CD8-positive, alpha-beta T cell (primary cell): ENCODE measurements at regions of chr3 and their contacts with region 1.

Region 1: GRCh38 chr3:98540346-98540745 is 8.6 kb downstream of the GPR15 start:
- DNase-seq: peak in 1 of 9 experiments; percentile 56
- ATAC-seq: peak; percentile 21
- H3K4me3 ChIP-seq: no peak overlapping the region
- H3K4me3 Mint-ChIP-seq: peak overlapping the region; percentile 22
- H3K27ac ChIP-seq: no peak overlapping the region
- H3K27ac Mint-ChIP-seq: peak overlapping the region; percentile 2
- H3K4me1 ChIP-seq: no peaks in the 10 kb centered on the region
- H3K4me1 Mint-ChIP-seq: peaks cover 11% of the 10 kb centered on the region
- H3K27me3 ChIP-seq: no peaks in the 10 kb centered on the region
- H3K27me3 Mint-ChIP-seq: no peaks in the 10 kb centered on the region
- CTCF ChIP-seq: no peak

Region 2: DNA sequence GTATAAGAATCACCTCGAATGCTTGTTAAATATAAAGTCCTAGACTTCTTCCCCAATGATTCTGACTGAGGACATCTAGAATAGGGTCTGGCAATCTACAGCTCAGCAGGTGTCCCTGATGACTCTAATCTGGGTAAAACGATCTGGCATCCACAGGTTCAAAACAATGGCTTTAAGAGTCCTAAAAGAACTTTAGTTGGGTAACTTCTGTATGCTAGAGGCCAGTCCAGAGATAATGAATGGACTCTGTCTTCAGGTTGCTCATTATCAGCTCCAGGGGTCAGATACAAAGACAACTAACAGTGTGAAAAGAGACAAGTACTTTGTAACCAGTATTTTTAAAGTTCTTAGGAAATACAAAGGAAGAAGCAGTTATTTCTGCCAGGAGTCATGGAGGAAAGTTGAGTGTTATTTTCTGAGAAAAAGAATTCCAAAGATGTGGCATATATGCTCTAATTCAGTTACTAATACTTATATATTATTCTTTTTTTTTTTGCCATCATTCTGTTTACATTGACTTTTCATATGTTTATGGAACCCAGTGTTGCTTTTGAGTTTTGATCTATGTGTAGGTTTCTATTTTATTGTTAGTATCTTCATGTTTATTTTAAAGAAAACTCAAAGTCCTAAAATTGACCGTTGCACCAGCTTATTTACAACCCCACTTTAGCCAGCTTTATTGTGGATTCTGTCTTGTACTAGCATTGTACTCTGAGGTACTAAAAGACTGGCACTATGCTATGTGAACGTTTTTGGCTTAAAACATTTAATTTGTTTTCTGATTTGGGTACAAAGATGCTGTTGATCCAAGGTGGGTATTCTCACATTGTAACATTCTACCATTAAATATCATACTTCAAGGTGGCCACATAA is 11.6 kb before region 1 on chr3:
- CTCF ChIA-PET with region 1: interaction called, 3 read pairs
- POLR2A ChIA-PET with region 1: interaction called, 3 read pairs
- intact Hi-C with region 1: loop called in 1 of 2 experiments (anchors 2 kb)
- DNase-seq: no peak
- ATAC-seq: no peak
- H3K4me3 ChIP-seq: no peak overlapping the region
- H3K4me3 Mint-ChIP-seq: no peak overlapping the region
- H3K27ac ChIP-seq: no peak overlapping the region
- H3K27ac Mint-ChIP-seq: no peak overlapping the region
- H3K4me1 ChIP-seq: no peaks in the 10 kb centered on the region
- H3K4me1 Mint-ChIP-seq: peaks cover 8% of the 10 kb centered on the region
- H3K27me3 ChIP-seq: no peaks in the 10 kb centered on the region
- H3K27me3 Mint-ChIP-seq: no peaks in the 10 kb centered on the region
- CTCF ChIP-seq: no peak

Region 3: DNA sequence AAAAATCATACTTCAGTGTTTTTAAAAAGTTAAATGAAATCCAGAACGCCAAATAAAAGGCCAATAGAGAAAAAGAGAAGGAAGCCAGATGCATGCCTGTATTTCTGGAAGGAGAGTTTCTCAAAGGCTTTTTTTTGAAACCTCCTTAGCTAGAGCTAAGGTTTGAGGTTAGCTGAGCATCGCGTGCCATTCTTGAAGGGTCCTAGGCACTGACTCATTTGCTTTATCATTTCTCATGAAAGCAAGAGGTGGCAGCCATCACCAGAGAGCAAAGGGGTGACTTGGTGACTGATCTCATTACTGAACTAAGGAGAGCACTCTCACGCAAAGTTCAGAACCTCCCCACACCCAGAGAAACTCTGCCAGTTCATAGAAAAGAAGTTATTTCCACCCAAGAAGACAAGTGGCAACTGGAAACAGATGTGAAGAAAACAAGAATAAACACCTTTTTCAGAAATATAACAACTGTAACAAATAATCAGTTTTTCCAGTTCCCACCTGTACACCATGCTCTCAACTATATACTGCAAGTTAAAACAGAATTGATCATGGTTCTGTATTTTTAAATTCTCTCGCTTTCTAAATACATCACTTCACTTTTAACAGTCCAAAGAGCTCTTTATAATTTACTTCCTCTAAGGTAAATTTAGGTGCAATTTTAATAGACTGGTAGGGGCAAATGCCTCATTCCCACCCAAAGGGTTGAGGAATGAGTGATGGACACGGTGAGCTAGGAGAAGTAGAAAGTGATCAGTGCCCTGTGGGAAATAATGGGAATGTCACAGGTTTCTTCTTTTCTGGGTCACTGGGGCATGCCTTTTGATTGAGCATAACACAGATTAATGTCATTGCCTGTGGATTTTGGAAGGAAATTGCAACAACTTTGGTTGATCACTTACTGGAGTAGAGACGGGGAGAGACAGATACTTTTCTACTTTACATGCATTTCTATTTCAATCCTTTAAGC is 16.1 kb after region 1 on chr3:
- CTCF ChIA-PET with region 1: no interaction called
- POLR2A ChIA-PET with region 1: interaction called, 3 read pairs
- intact Hi-C with region 1: loop called in 1 of 2 experiments (anchors 1 kb)
- DNase-seq: peak in 8 of 9 experiments; percentile 31 to 85 (median 64)
- ATAC-seq: peak; percentile 83
- H3K4me3 ChIP-seq: no peak overlapping the region
- H3K4me3 Mint-ChIP-seq: peak overlapping the region; percentile 42
- H3K27ac ChIP-seq: peak overlapping the region in 1 of 2 experiments; percentile 54
- H3K27ac Mint-ChIP-seq: peak overlapping the region; percentile 75
- H3K4me1 ChIP-seq: no peaks in the 10 kb centered on the region
- H3K4me1 Mint-ChIP-seq: peaks cover 69% of the 10 kb centered on the region
- H3K27me3 ChIP-seq: no peaks in the 10 kb centered on the region
- H3K27me3 Mint-ChIP-seq: no peaks in the 10 kb centered on the region
- CTCF ChIP-seq: no peak